RWPE1 (cell line): ENCODE measurements at regions of chr19 and their contacts with region 1.

Region 1: GRCh38 chr19:47406711-47407416 is 12.5 kb downstream of the MEIS3 start:
- DNase-seq: no peak
- H3K27ac ChIP-seq: no peak overlapping the region
- CTCF ChIP-seq: no peak

Region 2: DNA sequence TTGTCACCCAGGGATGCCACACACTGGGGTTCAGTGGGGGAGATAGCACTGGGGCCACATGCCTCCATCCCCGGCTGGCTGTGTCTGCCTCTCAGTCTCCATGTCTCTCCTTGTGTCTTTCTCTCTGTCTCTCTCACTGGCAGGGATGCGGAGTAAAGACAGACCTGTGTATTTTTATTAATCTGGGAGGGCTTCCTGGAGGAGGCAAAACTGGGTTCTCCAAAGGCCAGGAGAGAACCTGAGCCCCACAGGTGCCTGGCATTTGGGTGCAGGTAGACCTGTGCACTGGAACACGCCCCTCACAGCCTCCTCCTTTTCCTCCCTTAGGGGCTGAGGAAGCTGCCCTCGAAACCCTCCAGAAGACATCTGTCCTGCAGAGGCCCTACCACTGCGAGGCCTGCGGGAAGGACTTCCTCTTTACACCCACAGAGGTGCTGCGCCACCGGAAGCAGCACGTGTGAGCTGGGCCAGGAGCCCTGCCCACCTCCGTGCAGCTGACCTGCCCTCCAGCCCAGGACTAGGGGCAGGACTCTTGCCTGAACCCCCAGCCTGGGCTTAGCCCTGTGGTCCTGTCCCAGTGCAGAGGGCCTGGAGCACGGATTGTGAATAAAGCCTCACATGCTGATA is 25.1 kb before region 1 on chr19:
- CTCF ChIA-PET with region 1: no interaction called
- POLR2A ChIA-PET with region 1: interaction called, 13 read pairs
- DNase-seq: no peak
- H3K27ac ChIP-seq: peak overlapping the region; percentile 29; the same call in 1 of the 2 replicates
- CTCF ChIP-seq: no peak

Region 3: GRCh38 chr19:47391510-47392223 is 15.2 kb before region 1 on chr19:
- CTCF ChIA-PET with region 1: interaction called, 11 read pairs
- POLR2A ChIA-PET with region 1: no interaction called
- DNase-seq: peak; percentile 57
- H3K27ac ChIP-seq: no peak overlapping the region
- CTCF ChIP-seq: peak; percentile 84